GM13977 (cell line): ENCODE measurements at regions of chr18 and their contacts with region 1.

Region 1: DNA sequence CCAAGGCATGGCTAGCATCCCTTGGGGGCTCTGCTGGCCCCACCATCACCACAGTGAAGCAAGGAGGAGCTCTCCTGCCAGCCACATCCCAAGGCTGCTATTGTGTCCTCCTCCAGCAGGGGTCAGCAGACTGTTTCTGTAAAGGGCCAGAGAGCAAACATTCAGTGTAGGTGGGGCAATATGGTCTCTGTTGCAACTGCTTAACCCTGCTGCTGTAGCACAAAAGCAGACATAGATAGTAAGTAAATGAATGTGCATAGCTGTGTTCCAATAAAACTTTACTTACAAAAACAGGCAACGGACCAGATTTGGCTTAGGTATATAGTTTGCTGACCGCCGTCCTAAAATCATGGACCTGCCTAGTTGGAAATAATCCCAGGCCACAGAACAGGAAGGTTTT is 36.4 kb upstream of the ZBTB7C start:
- DNase-seq: peak; percentile 66
- CTCF ChIP-seq: peak; percentile 90

Region 2: DNA sequence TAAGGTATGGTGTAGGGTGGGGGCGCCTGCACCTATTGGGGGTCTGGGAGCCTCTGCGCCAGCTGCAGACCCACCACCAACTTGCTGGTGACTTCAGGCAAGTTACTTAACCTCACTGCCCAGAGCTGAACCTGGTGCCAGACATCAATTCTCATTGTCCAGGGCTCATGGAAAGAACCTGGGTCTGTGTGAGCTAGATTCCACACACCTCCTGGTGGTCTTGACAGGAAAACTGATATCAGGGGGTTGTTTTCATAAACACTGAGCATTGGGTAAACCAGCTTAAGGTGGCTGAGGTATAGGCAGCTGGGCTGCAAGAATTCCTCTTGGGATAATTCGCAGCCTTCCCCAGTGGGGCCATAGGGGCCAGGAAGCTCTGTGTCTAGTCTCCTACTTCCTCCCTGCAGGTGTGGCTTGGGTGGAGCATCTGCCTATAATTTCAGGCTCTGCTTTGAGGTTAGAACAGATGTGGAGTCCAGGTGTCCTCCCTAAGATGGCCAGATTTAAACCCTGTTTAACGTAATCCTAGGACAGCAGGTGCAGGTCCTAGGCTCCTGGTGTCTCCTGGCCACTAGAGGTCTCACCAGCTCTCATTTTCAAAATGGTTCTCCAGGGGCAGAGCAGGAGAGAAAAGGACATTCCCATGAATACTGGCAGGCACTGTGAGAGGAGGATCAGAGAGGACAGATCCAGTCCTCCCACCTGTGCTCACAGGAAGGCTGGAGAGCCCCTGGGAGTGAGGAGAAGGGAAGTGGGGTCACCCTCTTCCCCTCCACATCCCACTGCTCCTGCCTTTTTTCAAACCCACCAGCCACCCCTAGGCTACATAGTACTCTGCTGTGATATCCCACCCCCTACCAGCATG is 414.7 kb before region 1 on chr18:
- in situ Hi-C with region 1: loop called (anchors 10 kb)
- DNase-seq: peak; percentile 57
- CTCF ChIP-seq: peak; percentile 76

Region 3: DNA sequence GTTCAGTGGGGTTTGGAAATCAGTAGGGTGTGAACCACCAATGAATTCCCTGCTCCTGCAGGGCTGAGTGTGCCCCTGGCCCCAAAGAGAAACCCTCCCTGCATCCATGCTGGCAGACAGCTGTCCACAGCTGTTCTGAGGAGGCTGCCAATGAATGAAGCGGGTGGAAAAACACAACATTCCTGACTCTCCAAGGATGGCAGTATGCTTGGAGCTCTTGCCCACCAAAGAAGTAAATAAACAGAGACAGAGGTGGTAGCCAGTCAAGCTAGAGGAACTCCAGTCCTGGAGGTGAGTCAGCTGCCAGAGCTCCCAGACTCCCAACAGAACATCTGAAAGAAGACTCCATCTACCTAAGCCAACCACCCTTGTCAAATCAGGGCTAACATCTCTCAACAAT is 42.6 kb before region 1 on chr18:
- in situ Hi-C with region 1: no loop called
- DNase-seq: no peak
- CTCF ChIP-seq: no peak

Region 4: DNA sequence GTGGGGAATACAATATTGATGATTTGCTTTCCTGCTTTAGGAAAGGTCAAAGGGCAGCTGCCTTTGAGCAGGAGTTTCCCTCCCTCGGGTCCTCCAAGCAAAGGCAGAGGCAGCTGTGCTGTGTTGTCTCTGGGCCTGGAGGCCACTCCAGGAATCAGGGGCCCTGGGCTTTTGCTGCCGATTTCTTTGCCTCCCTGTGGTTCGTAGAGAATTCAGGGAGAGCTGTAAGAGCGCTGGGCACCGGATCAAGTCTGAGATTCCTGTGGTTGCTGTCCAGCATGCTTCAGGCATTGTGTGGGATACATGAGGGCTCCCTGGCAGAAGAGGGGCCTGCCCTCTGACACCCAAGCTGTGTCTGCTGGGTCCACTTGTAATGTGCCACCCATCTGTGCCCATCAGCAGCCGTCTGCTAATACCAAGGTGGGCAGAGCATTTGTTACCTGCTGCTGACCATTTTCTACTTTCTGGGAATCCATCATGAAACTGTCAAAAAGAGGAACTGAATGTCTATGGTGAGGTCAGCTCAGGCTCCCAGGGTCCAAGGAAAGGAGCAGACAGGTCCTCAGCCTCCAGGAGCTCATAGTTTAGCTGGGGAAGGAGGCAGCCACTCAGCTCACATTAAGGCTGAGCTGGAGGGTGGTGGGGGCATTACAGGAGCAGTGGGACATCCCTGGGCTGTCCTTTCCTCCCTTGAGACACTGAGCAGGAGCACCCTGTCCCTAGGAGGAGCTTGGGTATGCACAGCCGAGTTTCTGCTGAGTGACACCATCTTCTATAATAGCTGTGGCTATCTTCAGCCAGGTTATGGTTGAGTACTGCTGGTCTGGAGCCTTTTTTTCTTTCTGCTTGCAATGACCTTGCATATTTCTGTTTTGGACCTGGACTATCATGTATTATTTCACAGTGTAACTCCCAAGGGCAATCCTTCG is 161.8 kb after region 1 on chr18:
- in situ Hi-C with region 1: no loop called
- DNase-seq: no peak
- CTCF ChIP-seq: no peak